ENCODE measurements at regions of chr2 and their contacts with region 1.

Region 1: DNA sequence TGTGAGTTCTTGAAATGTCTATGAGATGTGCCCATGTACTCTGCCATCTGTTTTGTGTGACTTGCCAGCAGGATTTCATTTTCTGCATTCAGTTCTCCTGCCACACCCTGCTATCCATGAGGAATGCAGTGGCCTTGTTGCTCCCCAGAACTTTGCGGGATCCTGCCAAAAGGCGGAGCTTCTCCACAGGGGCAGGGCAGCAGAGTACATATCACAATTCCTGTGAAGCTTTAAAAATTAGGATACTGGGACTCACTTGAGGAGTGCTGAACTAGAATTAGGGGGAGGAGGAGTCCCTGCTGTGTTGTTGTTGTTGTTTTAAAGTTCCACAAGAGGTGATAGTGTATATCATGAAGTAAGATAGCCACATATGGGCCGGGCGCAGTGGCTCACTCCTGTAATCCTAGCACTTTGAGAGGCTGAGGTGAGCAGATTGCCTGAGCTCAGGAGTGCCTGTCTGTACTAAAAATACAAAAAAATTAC is 76.4 kb downstream of the TANC1 start:
- DNase-seq: no peak

Region 2: DNA sequence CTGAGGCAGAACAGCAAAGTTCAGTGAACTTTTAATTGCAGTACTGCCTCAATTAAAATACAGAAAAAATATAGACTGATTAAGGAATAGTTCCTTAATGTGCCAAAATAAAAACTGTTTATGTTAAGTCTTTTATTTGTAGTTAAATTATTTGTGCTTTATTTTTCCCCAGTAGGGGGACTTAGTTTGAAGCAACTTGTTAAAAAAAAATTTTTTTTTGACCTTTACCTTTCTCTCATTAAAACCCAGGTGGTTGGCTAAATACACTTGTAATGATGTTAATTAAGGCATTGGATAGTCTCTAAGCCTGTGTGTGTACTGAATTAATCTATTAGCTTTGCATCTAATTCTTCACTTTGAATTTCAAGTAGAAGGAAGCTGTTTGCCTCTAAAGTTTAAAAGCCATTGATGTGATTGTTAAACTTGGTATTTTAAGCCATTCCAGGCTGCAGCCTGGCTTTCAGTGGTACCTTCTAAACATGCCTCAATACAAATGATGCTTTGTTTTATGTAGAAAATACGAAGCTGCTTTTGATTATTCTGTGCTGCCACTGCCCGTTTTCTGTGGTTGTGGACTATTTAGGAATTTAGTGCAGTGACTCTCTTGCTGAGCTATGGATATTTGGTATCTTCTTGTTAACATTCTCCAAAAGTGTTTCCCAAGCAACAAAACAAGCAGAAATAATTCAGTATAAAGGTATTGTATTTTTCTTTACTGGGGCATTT is 26.5 kb after region 1 on chr2:
- intact Hi-C with region 1: no loop called
- DNase-seq: no peak

Region 3: DNA sequence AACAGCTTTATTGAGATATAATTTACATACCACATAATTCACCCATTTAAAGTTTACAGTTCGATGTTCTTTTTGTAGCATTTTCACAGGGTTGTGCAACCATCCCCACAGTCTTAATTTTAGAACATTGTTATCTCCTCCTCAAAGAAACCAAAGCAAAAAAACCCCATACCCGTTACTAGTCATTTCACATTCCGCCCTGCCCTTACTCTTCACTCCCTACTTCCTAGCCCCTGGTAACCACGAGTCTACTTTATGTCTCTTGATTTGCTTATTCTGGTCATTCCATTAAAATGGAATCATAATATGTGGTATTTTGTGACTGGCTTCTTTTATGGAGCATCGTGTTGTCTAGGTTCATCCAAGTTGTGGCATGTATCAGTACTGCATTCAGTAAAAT is 61.3 kb after region 1 on chr2:
- intact Hi-C with region 1: loop called (anchors 5 kb)
- DNase-seq: no peak

Measured in cardiac septum (tissue), 1 donor.